PC-3 (cell line): ENCODE measurements at regions of chr6 and their contacts with region 1.

Region 1: DNA sequence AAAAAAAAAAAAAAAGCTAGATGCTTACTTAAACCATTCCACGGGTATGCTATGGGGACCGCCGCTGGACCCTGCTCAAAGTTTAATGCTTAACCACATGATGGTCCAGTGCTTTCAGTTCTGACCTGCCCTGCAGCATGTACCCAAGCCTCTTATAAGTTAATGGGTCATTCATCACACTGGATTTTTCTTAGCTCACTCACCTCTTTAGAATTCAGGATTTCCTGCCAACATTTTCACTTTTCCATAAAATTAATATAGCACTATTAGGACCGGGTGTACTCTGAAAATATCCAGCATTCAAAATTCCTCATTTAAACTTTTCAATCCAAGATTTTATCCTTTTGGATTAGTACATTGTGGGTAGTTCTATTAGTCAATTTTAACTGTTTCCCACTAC is 140.8 kb downstream of the ALDH8A1 start:
- DNase-seq: peak; percentile 16
- ATAC-seq: peak; percentile 24
- H3K4me3 ChIP-seq: no peak overlapping the region
- H3K27ac ChIP-seq: no peak overlapping the region
- H3K4me1 ChIP-seq: peaks cover 16% of the 10 kb centered on the region
- H3K27me3 ChIP-seq: no peaks in the 10 kb centered on the region
- CTCF ChIP-seq: no peak

Region 2: GRCh38 chr6:134723081-134723871 is 85.9 kb before region 1 on chr6:
- CTCF ChIA-PET with region 1: no interaction called
- POLR2A ChIA-PET with region 1: interaction called, 12 read pairs
- intact Hi-C with region 1: no loop called
- DNase-seq: no peak
- ATAC-seq: no peak
- H3K4me3 ChIP-seq: no peak overlapping the region
- H3K27ac ChIP-seq: no peak overlapping the region
- H3K4me1 ChIP-seq: peaks cover 16% of the 10 kb centered on the region
- H3K27me3 ChIP-seq: no peaks in the 10 kb centered on the region
- CTCF ChIP-seq: no peak

Region 3: DNA sequence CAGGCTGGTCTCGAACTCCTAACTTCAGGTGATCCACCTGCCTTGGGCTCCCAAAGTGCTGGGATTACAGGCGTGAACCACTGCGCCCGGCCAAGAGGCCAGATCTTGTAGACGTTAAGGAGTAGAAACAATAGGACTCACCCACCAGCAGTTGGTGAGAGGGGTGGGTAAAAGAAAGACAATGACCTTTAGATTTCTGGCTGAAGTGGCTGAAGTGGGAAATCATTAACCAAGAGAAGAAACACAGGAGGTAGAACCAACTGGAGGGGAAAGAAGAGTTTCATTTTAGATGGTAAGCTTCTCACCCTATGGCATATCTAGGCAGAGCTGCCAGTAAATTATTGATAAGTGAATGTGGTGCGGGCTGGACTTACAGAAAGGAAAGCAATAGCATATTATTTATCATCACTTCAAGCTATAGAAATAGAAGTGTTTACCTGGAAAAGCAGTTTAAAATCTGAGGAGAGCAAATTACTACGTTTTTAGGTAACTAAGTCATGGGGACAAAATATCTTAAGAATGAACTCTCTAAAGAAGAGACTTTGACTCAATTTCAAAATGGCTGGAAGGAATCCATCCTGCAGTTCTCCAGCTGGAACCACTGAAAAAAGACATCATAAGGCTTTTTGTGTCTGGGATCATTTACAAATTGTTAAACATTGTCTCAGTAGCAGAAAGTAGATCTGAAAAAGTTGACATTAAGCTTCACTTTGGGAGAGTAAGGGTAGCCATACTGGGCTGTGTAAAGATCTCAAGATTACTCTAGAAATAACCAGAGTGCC is 31.1 kb after region 1 on chr6:
- CTCF ChIA-PET with region 1: no interaction called
- POLR2A ChIA-PET with region 1: no interaction called
- intact Hi-C with region 1: no loop called
- DNase-seq: no peak
- ATAC-seq: no peak
- H3K4me3 ChIP-seq: no peak overlapping the region
- H3K27ac ChIP-seq: no peak overlapping the region
- H3K4me1 ChIP-seq: no peaks in the 10 kb centered on the region
- H3K27me3 ChIP-seq: no peaks in the 10 kb centered on the region
- CTCF ChIP-seq: no peak

Region 4: DNA sequence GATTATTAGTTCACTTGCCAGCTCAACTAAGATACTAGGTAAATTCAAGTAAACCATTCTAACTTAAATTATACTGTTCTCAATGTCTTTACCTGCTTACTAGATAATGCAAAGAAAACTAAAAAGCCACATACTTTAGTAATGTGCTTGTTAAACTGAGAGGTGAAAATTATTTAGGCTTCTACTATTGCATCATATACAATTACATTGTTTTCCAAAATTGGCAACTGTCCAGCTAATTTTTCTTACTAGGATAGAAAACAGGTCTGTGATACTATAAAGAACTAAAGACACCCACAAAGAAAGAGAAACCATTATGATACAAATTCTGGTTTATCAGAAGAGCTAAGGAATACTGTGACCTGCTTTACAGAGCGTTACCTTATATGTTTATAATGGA is 186.4 kb after region 1 on chr6:
- CTCF ChIA-PET with region 1: no interaction called
- POLR2A ChIA-PET with region 1: no interaction called
- intact Hi-C with region 1: no loop called
- DNase-seq: no peak
- ATAC-seq: no peak
- H3K4me3 ChIP-seq: no peak overlapping the region
- H3K27ac ChIP-seq: no peak overlapping the region
- H3K4me1 ChIP-seq: no peaks in the 10 kb centered on the region
- H3K27me3 ChIP-seq: no peaks in the 10 kb centered on the region
- CTCF ChIP-seq: no peak